Dendritic cell treated with granulocyte-macrophage colony-stimulating factor and Interleukin-4, amounts not matched to agents 40 ng/mL and 50 ng/mL, for 4 days (primary cell): ENCODE measurements at regions of chrX and their contacts with region 1.

Region 1: GRCh38 chrX:109485470-109486340 is 3.8 kb upstream of the GUCY2F start:
- H3K4me3 Mint-ChIP-seq: no peak overlapping the region
- H3K27ac Mint-ChIP-seq: no peak overlapping the region
- H3K4me1 Mint-ChIP-seq: no peaks in the 10 kb centered on the region
- H3K27me3 Mint-ChIP-seq: no peaks in the 10 kb centered on the region

Region 2: GRCh38 chrX:109533631-109534030 is 47.9 kb after region 1 on chrX:
- intact Hi-C with region 1: loop called (anchors 5 kb)
- H3K4me3 Mint-ChIP-seq: no peak overlapping the region
- H3K27ac Mint-ChIP-seq: peak overlapping the region; percentile 57
- H3K4me1 Mint-ChIP-seq: peaks cover 10% of the 10 kb centered on the region
- H3K27me3 Mint-ChIP-seq: no peaks in the 10 kb centered on the region

Region 3: GRCh38 chrX:109578916-109579315 is 93.2 kb after region 1 on chrX:
- intact Hi-C with region 1: no loop called
- H3K4me3 Mint-ChIP-seq: no peak overlapping the region
- H3K27ac Mint-ChIP-seq: no peak overlapping the region
- H3K4me1 Mint-ChIP-seq: peaks cover 5% of the 10 kb centered on the region
- H3K27me3 Mint-ChIP-seq: no peaks in the 10 kb centered on the region

Region 4: DNA sequence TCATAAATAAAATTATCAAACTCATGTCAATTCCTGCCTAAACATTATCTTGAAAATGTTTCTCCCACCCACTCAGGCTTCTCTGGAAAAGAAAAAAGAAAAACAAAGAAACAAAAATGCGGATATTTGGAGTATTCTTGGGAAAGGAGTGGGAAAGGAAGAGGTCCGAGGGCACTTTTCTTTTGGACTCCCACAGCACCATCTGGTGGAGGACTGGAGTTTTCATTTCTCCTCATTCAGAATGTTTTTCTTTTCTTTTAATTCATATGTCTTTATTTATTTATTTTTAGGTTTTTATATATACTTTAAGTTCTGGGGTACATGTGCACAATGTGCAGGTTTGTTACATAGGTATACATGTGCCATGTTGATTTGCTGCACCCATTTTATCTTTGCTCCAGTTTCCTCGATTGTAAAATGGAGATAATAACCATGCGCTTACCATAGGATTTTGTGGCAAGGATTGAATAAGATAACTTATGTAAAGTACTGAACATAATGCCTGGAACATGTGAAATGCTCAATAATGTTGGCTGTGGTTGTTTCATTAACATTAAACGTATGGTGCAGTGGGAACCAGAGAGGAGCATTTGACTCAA is 147.3 kb after region 1 on chrX:
- intact Hi-C with region 1: loop called (anchors 2 kb)
- H3K4me3 Mint-ChIP-seq: no peak overlapping the region
- H3K27ac Mint-ChIP-seq: no peak overlapping the region
- H3K4me1 Mint-ChIP-seq: no peaks in the 10 kb centered on the region
- H3K27me3 Mint-ChIP-seq: no peaks in the 10 kb centered on the region